CD4-positive, alpha-beta T cell (primary cell): ENCODE measurements at regions of chr4 and their contacts with region 1.

Region 1: DNA sequence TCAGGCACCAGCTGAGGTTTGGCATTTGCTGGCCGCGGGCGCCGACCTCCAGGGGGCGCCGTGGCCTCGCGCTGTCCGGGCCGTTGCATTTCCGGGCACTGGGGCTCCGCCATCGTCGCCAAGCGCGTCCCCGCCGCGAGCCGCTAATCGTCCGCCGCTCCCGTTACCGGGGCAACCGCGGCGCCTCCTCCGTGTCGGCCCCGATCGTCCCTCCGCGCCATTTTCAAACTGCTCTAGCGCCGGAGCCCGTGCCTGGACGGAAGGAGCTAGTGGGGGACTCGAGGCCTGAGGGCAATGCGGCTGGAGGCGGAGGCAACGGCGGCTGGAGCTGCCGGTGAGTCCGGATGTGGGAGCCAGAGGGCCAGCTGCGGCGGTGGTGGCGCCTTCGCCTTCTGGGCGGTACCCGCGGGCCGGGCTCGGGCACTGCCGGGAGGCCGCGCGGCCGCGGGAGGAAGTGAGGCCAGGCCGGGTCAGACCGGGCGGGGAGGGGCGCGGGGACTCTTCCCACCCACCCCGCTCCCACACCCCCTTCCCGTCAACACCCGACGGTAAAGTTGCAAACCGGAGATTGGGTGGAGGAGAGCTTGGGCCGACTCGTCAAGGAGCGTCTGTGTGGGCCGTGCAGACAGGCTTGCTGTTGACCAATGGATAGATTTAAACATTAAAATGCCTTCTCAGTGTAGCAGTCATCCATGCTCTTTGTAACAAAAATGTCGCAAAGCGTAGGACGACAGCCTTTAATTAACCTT is at the start of gene CEP135:
- DNase-seq: peak; percentile 83 to 96 (median 91)
- ATAC-seq: peak; percentile 68
- H3K4me3 ChIP-seq: peak within 1 kb of the TSS; percentile 74
- H3K4me3 Mint-ChIP-seq: peak within 1 kb of the TSS; percentile 90
- H3K27ac ChIP-seq: peak within 1 kb of the TSS; percentile 79 to 83
- H3K27ac Mint-ChIP-seq: peak within 1 kb of the TSS; percentile 96
- H3K4me1 ChIP-seq: peaks cover 26% of the 10 kb centered on the region
- H3K4me1 Mint-ChIP-seq: peaks cover 58% of the 10 kb centered on the region
- H3K27me3 ChIP-seq: no peaks in the 10 kb centered on the region
- H3K27me3 Mint-ChIP-seq: no peaks in the 10 kb centered on the region
- CTCF ChIP-seq: peak; percentile 95
- total RNA-seq, gene CEP135: 19.6 to 21.0 TPM

Region 2: DNA sequence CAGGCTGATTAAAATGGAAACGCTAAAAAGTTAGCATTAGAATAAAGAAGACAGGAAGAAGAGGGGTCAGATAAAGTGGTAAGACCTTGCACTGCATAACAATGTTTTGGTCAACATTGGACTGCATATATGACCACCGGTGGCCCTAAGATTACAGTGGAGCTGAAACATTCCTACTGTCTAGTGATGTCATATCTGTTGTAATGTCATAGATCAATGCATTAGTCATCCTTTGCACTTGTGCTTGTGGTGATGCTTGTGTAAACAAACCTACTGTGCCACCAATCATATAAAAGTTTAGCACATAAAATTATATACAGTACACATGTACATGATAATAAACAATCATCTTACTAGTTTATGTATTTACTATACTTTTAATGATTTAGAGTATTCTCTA is 480.2 kb before region 1 on chr4:
- CTCF ChIA-PET with region 1: no interaction called
- POLR2A ChIA-PET with region 1: no interaction called
- intact Hi-C with region 1: no loop called
- DNase-seq: no peak
- ATAC-seq: no peak
- H3K4me3 ChIP-seq: no peak overlapping the region
- H3K4me3 Mint-ChIP-seq: no peak overlapping the region
- H3K27ac ChIP-seq: no peak overlapping the region
- H3K27ac Mint-ChIP-seq: no peak overlapping the region
- H3K4me1 ChIP-seq: no peaks in the 10 kb centered on the region
- H3K4me1 Mint-ChIP-seq: no peaks in the 10 kb centered on the region
- H3K27me3 ChIP-seq: no peaks in the 10 kb centered on the region
- H3K27me3 Mint-ChIP-seq: no peaks in the 10 kb centered on the region
- CTCF ChIP-seq: no peak

Region 3: DNA sequence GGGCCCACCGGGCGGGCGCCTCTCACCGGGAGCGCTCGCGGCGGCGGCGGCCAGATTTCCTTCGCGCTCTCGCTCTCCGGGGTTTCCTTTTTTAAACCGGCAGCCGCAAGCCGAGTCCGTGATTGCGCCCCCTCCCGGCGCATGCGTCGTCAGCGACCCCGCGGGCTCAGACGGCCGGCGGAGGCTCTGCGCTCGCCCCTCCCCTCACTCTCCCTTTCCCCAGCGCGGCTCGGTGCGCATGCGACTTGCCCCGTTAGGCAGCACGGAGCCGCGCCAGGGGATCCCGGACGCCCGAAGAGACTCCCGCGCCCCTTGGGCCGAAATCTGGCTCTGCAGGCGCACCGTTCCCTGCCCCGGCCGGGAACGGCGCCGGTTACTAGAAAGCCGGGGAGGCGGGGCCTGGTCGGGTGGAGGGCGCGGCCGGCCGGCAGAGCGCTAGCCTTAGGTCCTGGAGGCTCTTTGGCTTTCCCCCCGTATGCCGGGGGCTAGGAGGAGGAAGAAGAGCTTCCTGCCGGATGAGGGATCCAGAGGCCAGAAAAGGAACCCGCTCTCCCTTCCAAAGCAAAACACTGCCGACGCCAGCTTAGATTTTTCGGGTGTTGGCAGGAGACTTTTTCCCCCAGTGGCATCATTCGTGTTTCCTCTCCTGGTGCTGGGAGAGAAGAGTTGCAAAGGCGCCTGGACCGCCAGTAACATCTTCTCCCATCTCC is 402.0 kb before region 1 on chr4 and contains the start of gene CLOCK:
- CTCF ChIA-PET with region 1: interaction called, 7 read pairs
- POLR2A ChIA-PET with region 1: interaction called, 7 read pairs
- intact Hi-C with region 1: loop called in 1 of 2 experiments (anchors 5 kb)
- DNase-seq: peak; percentile 63 to 94 (median 81)
- ATAC-seq: peak; percentile 71
- H3K4me3 ChIP-seq: peak within 1 kb of the TSS; percentile 96
- H3K4me3 Mint-ChIP-seq: peak within 1 kb of the TSS; percentile 93
- H3K27ac ChIP-seq: peak within 1 kb of the TSS; percentile 75 to 82
- H3K27ac Mint-ChIP-seq: peak within 1 kb of the TSS; percentile 85
- H3K4me1 ChIP-seq: peaks cover 5% of the 10 kb centered on the region
- H3K4me1 Mint-ChIP-seq: peaks cover 39% of the 10 kb centered on the region
- H3K27me3 ChIP-seq: no peaks in the 10 kb centered on the region
- H3K27me3 Mint-ChIP-seq: no peaks in the 10 kb centered on the region
- CTCF ChIP-seq: peak; percentile 47
- total RNA-seq, gene CLOCK: 4.9 to 5.6 TPM

Region 4: DNA sequence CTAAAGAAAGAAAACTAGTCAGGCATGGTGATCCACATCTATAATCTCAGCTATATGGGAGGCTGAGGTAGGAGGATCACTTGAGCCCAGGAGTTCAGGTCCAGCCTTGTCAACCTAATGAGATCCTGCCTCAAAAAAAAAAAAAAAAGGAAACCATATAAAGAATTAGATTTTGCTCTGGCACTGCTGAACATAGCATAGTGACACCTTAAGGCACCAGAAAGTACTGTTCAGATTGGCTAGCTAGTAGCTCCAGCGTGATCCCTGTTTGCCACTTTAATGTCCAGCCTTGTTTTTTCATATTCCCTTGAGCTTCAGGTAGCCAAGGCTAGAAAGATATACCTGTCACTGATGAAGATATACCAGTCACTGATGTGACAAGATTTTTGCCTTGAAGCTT is 61.3 kb before region 1 on chr4:
- CTCF ChIA-PET with region 1: interaction called, 13 read pairs
- POLR2A ChIA-PET with region 1: interaction called, 10 read pairs
- intact Hi-C with region 1: no loop called
- DNase-seq: no peak
- ATAC-seq: no peak
- H3K4me3 ChIP-seq: no peak overlapping the region
- H3K4me3 Mint-ChIP-seq: no peak overlapping the region
- H3K27ac ChIP-seq: no peak overlapping the region
- H3K27ac Mint-ChIP-seq: no peak overlapping the region
- H3K4me1 ChIP-seq: no peaks in the 10 kb centered on the region
- H3K4me1 Mint-ChIP-seq: peaks cover 32% of the 10 kb centered on the region
- H3K27me3 ChIP-seq: no peaks in the 10 kb centered on the region
- H3K27me3 Mint-ChIP-seq: no peaks in the 10 kb centered on the region
- CTCF ChIP-seq: no peak

Region 5: DNA sequence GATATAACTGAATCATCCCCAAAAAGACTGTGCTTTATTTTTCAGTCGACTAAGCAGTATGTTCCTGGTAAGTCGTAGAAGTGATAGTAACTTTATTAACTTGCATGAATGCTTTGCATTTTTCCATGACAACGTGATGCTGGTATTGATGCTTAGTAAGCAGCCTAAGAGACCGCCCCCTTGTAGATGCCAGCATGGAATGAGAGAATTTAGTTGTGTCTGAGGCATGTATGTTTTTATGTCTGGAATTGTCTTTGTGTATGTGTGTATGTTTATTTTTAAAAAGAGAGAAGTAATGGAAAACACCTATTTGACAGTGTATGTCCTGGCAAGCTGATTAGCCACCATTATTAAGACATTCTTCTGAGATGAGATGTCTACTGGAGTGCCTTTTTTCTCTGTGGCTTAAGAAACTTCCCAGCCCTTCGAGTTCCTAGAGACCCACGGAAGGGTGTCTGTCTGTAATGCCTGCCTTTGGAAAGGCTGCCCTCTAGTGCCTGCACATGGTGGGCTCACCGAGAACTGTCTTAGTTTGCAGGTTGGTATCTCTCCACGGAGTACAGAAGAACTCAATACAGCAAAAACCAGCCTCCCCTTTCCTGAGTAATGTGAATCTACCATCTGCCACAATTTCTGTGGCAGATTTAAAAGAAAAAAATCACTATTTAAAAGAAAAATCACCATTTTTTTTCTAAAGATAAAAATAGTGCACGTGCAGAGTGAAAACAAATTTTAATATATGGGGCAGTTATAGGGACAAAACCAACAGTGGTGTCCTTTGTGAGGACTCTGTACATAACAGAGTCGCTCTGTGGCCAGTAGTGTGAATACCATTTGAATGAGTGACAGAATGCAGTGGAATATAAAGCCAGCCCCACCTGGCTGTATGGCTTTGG is 352.5 kb after region 1 on chr4:
- CTCF ChIA-PET with region 1: interaction called, 4 read pairs
- POLR2A ChIA-PET with region 1: no interaction called
- intact Hi-C with region 1: loop called (anchors 1 to 5 kb)
- DNase-seq: peak; percentile 24 to 75 (median 53)
- ATAC-seq: peak; percentile 97
- H3K4me3 ChIP-seq: peak overlapping the region; percentile 24
- H3K4me3 Mint-ChIP-seq: peak overlapping the region; percentile 46
- H3K27ac ChIP-seq: no peak overlapping the region
- H3K27ac Mint-ChIP-seq: no peak overlapping the region
- H3K4me1 ChIP-seq: peaks cover 7% of the 10 kb centered on the region
- H3K4me1 Mint-ChIP-seq: peaks cover 11% of the 10 kb centered on the region
- H3K27me3 ChIP-seq: no peaks in the 10 kb centered on the region
- H3K27me3 Mint-ChIP-seq: peaks cover 8% of the 10 kb centered on the region
- CTCF ChIP-seq: peak; percentile 83

Region 6: DNA sequence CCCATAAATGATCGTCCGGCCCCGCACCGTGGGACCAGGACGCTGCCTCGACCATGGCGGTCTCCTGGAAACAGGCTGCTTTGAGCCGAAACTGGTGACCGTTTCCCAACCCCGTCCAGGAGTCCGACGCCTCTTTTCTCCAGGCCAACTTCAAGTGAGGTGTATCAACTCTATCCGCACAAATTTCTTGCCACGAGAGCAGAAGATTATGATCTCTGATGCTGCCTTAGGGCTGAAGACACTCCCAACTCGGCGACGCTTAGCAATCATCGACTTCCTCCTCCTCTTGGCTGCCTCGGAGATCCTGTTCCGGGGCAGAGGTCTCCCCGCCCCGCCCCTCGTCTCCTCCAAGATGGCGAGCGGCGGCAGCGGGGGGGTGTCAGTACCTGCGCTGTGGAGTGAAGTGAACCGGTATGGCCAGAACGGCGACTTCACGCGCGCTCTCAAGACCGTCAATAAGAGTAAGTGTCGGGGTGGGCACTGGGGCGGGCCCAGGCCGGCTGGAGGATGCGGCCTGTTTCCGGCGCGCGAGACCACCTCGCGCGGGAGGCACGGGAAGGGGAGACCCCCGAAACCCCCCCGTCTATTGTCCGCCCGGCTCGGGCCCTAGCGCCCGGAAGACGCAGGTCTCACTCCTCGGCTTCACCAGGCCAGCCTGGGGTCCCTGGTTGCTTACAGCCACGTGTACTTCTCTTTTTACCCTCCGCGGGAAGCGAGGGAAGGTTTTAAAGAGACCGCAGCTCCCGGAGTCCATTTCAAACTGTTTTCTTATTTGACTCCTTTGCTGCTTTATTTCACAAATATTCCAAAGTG is 518.6 kb after region 1 on chr4 and contains the start of gene SRP72:
- CTCF ChIA-PET with region 1: no interaction called
- POLR2A ChIA-PET with region 1: no interaction called
- intact Hi-C with region 1: loop called in 1 of 2 experiments (anchors 10 kb)
- DNase-seq: peak; percentile 82 to 96 (median 87)
- ATAC-seq: peak; percentile 95
- H3K4me3 ChIP-seq: peak within 1 kb of the TSS; percentile 93
- H3K4me3 Mint-ChIP-seq: peak within 1 kb of the TSS; percentile 95
- H3K27ac ChIP-seq: peak within 1 kb of the TSS; percentile 84 to 94
- H3K27ac Mint-ChIP-seq: peak within 1 kb of the TSS; percentile 96
- H3K4me1 ChIP-seq: peaks cover 26% of the 10 kb centered on the region
- H3K4me1 Mint-ChIP-seq: peaks cover 66% of the 10 kb centered on the region
- H3K27me3 ChIP-seq: no peaks in the 10 kb centered on the region
- H3K27me3 Mint-ChIP-seq: no peaks in the 10 kb centered on the region
- CTCF ChIP-seq: no peak
- total RNA-seq, gene SRP72: 108 to 119 TPM

Region 7: DNA sequence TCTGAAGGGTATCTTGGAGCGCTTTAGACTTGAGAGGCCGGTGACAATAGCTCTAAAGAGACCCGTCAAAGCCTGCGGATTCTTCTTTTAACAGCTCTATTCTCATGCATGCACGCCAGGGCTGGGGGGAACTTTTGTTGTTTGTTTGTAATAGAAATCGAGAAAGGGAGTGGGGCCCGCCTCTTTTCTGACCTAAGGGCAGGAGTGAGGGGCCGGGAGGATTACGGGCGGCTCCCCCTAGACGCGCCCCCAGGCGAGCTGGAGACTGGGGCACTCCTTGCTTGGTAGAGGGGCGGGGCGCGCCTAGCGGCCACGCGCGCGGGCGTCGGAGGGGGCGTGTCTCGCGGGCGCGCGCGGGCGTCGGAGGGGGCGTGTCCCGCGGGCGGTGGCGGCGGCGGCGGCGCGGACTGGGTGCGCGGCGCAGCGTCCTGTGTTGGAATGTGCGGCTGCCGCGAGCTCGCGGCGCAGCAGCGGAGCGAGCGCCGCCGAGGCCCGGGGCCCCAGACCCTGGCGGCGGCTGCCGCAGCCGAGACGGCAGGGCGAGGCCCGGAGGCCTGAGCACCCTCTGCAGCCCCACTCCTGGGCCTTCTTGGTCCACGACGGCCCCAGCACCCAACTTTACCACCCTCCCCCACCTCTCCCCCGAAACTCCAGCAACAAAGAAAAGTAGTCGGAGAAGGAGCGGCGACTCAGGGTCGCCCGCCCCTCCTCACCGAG is 958.7 kb after region 1 on chr4 and contains the start of gene REST:
- CTCF ChIA-PET with region 1: interaction called, 7 read pairs
- POLR2A ChIA-PET with region 1: interaction called, 17 read pairs
- intact Hi-C with region 1: loop called in 1 of 2 experiments (anchors 2 kb)
- DNase-seq: peak; percentile 68 to 95 (median 82)
- ATAC-seq: peak; percentile 64
- H3K4me3 ChIP-seq: peak within 1 kb of the TSS; percentile 98
- H3K4me3 Mint-ChIP-seq: peak within 1 kb of the TSS; percentile 92
- H3K27ac ChIP-seq: peak within 1 kb of the TSS; percentile 22 to 94
- H3K27ac Mint-ChIP-seq: peak within 1 kb of the TSS; percentile 84
- H3K4me1 ChIP-seq: peaks cover 33% of the 10 kb centered on the region
- H3K4me1 Mint-ChIP-seq: peaks cover 52% of the 10 kb centered on the region
- H3K27me3 ChIP-seq: no peaks in the 10 kb centered on the region
- H3K27me3 Mint-ChIP-seq: no peaks in the 10 kb centered on the region
- CTCF ChIP-seq: no peak
- total RNA-seq, gene REST: 56.8 to 57.6 TPM